Activated B cell treated with CpG ODN at 0.5 μM for 24 hours (primary cell): ENCODE measurements at regions of chr19 and their contacts with region 1.

Region 1: GRCh38 chr19:41928221-41928683 is at the start of gene ERFL:
- DNase-seq: no peak
- ATAC-seq: peak; percentile 35
- H3K4me3 Mint-ChIP-seq: no peak within 1 kb of the TSS
- H3K27ac Mint-ChIP-seq: peak within 1 kb of the TSS; percentile 73
- H3K4me1 Mint-ChIP-seq: peaks cover 35% of the 10 kb centered on the region
- H3K27me3 Mint-ChIP-seq: peaks cover 2% of the 10 kb centered on the region
- CTCF ChIP-seq: no peak
- total RNA-seq, gene ERFL: 0.64 and 1.1 TPM in 2 replicates

Region 2: GRCh38 chr19:41912899-41913537 is 15.2 kb before region 1 on chr19:
- CTCF ChIA-PET with region 1: no interaction called
- POLR2A ChIA-PET with region 1: interaction called, 4 read pairs
- intact Hi-C with region 1: loop called (anchors 2 kb)
- DNase-seq: no peak
- ATAC-seq: no peak
- H3K4me3 Mint-ChIP-seq: no peak overlapping the region
- H3K27ac Mint-ChIP-seq: no peak overlapping the region
- H3K4me1 Mint-ChIP-seq: peaks cover 42% of the 10 kb centered on the region
- H3K27me3 Mint-ChIP-seq: peaks cover 18% of the 10 kb centered on the region
- CTCF ChIP-seq: no peak

Region 3: GRCh38 chr19:41945135-41945766 is 17.0 kb after region 1 on chr19:
- CTCF ChIA-PET with region 1: interaction called, 4 read pairs
- POLR2A ChIA-PET with region 1: interaction called, 12 read pairs
- intact Hi-C with region 1: loop called (anchors 2 kb)
- DNase-seq: peak; percentile 67
- ATAC-seq: peak; percentile 82
- H3K4me3 Mint-ChIP-seq: peak overlapping the region; percentile 72
- H3K27ac Mint-ChIP-seq: peak overlapping the region; percentile 98
- H3K4me1 Mint-ChIP-seq: peaks cover 73% of the 10 kb centered on the region
- H3K27me3 Mint-ChIP-seq: no peaks in the 10 kb centered on the region
- CTCF ChIP-seq: no peak

Region 4: GRCh38 chr19:41959056-41960053 is 31.1 kb after region 1 on chr19 and contains the start of gene RABAC1:
- CTCF ChIA-PET with region 1: no interaction called
- POLR2A ChIA-PET with region 1: interaction called, 17 read pairs
- intact Hi-C with region 1: no loop called
- DNase-seq: peak; percentile 79
- ATAC-seq: peak; percentile 91
- H3K4me3 Mint-ChIP-seq: peak within 1 kb of the TSS; percentile 90
- H3K27ac Mint-ChIP-seq: peak within 1 kb of the TSS; percentile 90
- H3K4me1 Mint-ChIP-seq: peaks cover 17% of the 10 kb centered on the region
- H3K27me3 Mint-ChIP-seq: no peaks in the 10 kb centered on the region
- CTCF ChIP-seq: no peak
- total RNA-seq, gene RABAC1: 96.7 and 102 TPM in 2 replicates